Heart right ventricle (tissue), 16 donors: ENCODE measurements at regions of chr14 and their contacts with region 1.

Region 1: GRCh38 chr14:92748259-92749016 is at the start of gene LGMN:
- DNase-seq: peak; percentile 96 to 98
- ATAC-seq: peak; percentile 97 to 99 (median 98)
- H3K4me3 ChIP-seq: peak within 1 kb of the TSS; percentile 67 to 95 (median 76)
- H3K27ac ChIP-seq: peak within 1 kb of the TSS; percentile 26 to 92 (median 90)
- H3K4me1 ChIP-seq: peaks cover 10 to 69% (median 19%) of the 10 kb centered on the region in 9 donors
- H3K27me3 ChIP-seq: peaks cover 0 to 26% (median 0%) of the 10 kb centered on the region in 7 donors
- CTCF ChIP-seq: peak in 1 of 9 donors; percentile 6
- total RNA-seq, gene LGMN: 82.2 to 211 (median 103) TPM

Region 2: GRCh38 chr14:92693998-92694795 is 54.2 kb before region 1 on chr14:
- intact Hi-C with region 1: no loop called
- DNase-seq: no peak
- ATAC-seq: no peak
- H3K4me3 ChIP-seq: no peak overlapping the region
- H3K27ac ChIP-seq: no peak overlapping the region
- H3K4me1 ChIP-seq: peaks cover 7 to 50% (median 23%) of the 10 kb centered on the region in 9 donors
- H3K27me3 ChIP-seq: no peaks in the 10 kb centered on the region
- CTCF ChIP-seq: no peak

Region 3: GRCh38 chr14:92704036-92704804 is 44.2 kb before region 1 on chr14:
- intact Hi-C with region 1: no loop called
- DNase-seq: no peak
- ATAC-seq: peak; percentile 26 to 63 (median 54)
- H3K4me3 ChIP-seq: no peak overlapping the region
- H3K27ac ChIP-seq: peak overlapping the region in 2 of 10 donors; percentile 11 to 82
- H3K4me1 ChIP-seq: peaks cover 0 to 31% (median 0%) of the 10 kb centered on the region in 9 donors
- H3K27me3 ChIP-seq: no peaks in the 10 kb centered on the region
- CTCF ChIP-seq: no peak

Region 4: DNA sequence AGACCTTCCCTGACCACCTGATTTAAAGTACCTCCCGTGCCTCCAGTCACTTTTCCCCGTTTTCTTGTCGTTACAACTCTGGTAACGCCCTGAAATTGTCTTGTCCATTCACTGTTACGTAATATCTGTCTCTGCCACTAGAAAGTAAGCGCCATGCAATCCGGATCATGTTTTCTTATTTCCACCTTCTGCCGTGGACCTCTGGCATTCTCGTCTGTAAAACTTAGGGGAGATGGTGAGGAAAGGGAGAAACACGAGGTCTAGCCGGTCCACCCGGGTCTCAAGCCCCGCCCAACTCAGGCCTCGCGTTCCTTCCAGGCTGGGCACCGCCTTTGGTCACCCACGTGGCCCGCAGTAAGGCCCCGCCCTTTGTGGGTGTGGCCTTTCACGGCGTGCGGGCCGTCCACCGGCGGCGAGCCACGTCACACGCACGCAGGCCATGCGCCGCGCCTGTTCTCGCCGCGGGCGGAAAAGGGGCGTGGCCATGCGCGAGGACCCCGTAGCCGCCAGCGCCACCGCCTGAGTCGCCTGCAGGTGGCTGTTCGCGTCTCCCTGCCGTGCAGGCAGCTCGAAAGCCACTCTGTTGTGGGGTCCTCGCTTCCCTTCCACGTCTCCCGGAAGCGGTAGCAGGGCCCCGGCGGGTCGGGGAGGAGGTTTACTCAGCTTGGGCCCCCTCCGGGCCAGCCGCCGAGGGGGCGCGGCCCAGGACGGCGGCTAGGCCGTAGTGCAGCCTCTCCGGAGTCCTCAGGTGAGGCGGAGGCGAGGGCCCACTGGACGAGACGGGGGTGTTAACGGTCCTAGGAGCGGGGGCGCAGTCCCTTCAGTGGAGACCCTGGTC is 45.5 kb after region 1 on chr14 and contains the start of gene GOLGA5:
- intact Hi-C with region 1: loop called in 2 of 10 experiments (anchors 5 kb)
- DNase-seq: peak; percentile 96 to 98
- ATAC-seq: peak; percentile 98 to 100 (median 99)
- H3K4me3 ChIP-seq: peak within 1 kb of the TSS; percentile 49 to 99 (median 86)
- H3K27ac ChIP-seq: peak within 1 kb of the TSS; percentile 64 to 97 (median 88)
- H3K4me1 ChIP-seq: peaks cover 4 to 28% (median 25%) of the 10 kb centered on the region in 9 donors
- H3K27me3 ChIP-seq: no peaks in the 10 kb centered on the region
- CTCF ChIP-seq: peak in 2 of 9 donors; percentile 15 to 20
- total RNA-seq, gene GOLGA5: 18.5 to 25.5 (median 21.9) TPM